Right ventricle myocardium inferior (tissue), 1 donor: ENCODE measurements at regions of chr1 and their contacts with region 1.

Region 1: GRCh38 chr1:203625628-203626019 is 1.0 kb upstream of the ATP2B4 start:
- DNase-seq: no peak
- ATAC-seq: peak; percentile 41

Region 2: GRCh38 chr1:203512830-203513611 is 112.6 kb before region 1 on chr1:
- intact Hi-C with region 1: loop called (anchors 2 kb)
- DNase-seq: no peak
- ATAC-seq: peak; percentile 14

Region 3: DNA sequence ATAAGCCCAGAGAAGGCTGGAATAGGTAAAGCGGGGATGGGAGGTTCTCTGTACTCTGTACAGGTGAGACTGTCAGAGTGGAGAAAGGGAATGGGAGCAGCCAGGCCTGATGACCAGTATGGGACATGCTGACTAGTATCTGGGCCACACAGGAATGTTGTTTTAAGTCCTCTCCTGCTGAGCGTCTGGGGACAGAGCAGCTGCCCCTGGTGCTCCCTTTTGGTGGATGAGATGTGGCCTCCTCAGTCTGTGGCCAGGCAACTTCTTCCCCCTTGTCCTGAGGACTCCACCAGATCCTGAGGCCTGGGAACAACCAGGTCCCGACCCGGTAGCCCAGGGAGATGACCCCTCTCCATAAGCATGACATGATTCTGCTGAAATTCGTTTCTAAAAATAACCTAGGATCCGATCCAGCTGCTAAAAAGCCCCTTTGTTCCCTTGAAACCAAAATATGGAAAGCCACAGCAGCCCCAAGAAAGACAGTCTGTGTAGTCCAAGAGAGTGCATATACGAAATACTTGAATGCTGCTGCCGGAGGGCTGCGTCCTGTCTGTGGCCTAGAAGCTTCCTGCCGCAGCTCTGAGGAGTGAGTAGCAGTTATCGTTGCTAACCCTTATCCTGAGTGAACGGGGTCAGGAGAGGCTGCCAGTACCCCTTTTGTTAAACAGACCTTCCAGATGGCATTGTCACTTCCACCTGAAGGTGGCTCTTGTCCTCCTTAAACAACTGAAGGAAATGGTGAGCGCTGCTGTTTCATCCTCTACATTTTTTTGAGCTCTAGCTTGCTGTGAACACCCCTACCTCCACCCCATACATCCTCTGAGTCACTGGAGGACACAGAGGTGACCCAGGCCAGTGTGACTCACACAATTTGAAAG is 48.2 kb after region 1 on chr1:
- intact Hi-C with region 1: loop called (anchors 2 kb)
- DNase-seq: no peak
- ATAC-seq: peak; percentile 22

Region 4: DNA sequence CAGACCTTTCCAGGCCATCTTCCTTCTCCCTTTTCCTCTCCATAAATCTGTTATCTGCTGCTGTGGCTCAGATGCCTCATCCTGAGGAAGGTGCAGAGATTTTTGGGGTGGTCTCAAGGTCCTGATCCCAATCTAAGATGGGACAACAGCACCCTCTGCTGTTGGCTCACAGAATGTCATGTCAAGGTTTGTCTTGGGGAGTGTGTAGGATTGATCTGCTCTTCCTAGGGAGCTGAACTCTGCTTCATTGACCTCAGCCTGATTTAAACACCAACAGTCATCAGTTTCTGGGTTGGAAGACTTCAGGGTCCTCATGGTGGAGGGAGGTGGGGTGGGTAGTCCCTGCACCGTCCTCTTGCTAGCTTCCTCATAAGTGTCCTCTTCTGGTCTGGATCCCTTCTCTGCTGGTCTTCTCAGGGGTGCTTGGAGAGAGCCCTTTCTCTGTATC is 76.5 kb after region 1 on chr1:
- intact Hi-C with region 1: loop called (anchors 1 kb)
- DNase-seq: peak; percentile 68
- ATAC-seq: peak; percentile 53